ENCODE measurements at regions of chr9 and their contacts with region 1.

Region 1: GRCh38 chr9:114551883-114552685 is 35.5 kb upstream of the ATP6V1G1 start:
- DNase-seq: no peak
- H3K4me3 Mint-ChIP-seq: no peak overlapping the region
- H3K27ac Mint-ChIP-seq: no peak overlapping the region
- H3K4me1 Mint-ChIP-seq: no peaks in the 10 kb centered on the region
- H3K27me3 Mint-ChIP-seq: peaks cover 9% of the 10 kb centered on the region

Region 2: DNA sequence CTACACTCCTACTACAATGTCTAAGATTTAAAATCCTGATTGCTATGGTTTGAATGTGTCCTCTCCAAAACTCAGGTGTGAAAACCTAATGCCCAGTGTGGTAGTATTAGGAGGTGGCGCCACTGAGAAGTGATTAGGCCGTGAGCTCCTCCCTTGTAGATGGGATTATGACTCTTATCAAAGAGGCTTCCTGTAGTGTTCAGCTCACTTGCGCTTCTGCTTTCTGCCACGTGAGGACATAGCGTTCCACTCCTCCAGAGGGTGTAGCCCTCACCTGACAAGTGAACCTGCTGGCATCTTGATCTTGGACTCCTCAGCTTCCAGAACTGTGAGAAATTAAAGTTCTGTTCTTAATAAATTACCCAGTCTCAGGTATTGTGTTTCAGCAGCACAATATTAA is 13.8 kb before region 1 on chr9:
- CTCF ChIA-PET with region 1: interaction called, 12 read pairs
- POLR2A ChIA-PET with region 1: no interaction called
- DNase-seq: peak; percentile 27
- H3K4me3 Mint-ChIP-seq: no peak overlapping the region
- H3K27ac Mint-ChIP-seq: no peak overlapping the region
- H3K4me1 Mint-ChIP-seq: peaks cover 4% of the 10 kb centered on the region
- H3K27me3 Mint-ChIP-seq: peaks cover 27% of the 10 kb centered on the region

Region 3: DNA sequence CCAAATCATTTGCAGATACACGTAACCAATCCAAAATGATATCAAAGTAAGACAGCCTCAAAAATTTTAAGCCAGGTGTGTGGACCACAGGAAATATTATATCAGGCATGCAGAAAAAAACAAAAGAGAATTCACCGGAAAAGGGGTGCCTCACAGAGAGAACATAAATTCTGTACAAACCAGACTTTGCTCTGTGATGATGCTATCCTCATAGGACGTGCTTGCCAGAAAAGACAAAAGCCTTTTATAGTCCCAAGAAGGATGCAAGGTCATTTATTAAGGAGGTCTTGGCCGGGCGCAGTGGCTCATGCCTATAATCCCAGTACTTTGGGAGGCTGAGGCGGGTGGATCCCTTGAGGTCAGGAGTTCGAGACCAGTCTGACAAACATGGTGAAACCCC is 18.7 kb after region 1 on chr9:
- CTCF ChIA-PET with region 1: no interaction called
- POLR2A ChIA-PET with region 1: no interaction called
- DNase-seq: no peak
- H3K4me3 Mint-ChIP-seq: no peak overlapping the region
- H3K27ac Mint-ChIP-seq: no peak overlapping the region
- H3K4me1 Mint-ChIP-seq: peaks cover 4% of the 10 kb centered on the region
- H3K27me3 Mint-ChIP-seq: peaks cover 2% of the 10 kb centered on the region

Measured in activated CD4-positive, alpha-beta T cell treated with anti-CD3 and anti-CD28 coated beads, Interleukin-2, amount 10 ng/mL, durations not matched to agents 7 days and 5 days (primary cell).